Thyroid gland (tissue), 4 donors: ENCODE measurements at regions of chr20 and their contacts with region 1.

Region 1: GRCh38 chr20:49219089-49219923 is at the start of gene DDX27:
- DNase-seq: peak; percentile 96 to 97
- H3K4me3 ChIP-seq: peak within 1 kb of the TSS; percentile 37 to 74 (median 52)
- H3K27ac ChIP-seq: peak within 1 kb of the TSS; percentile 44 to 89 (median 83)
- H3K4me1 ChIP-seq: peaks cover 13 to 18% of the 10 kb centered on the region in 2 donors
- H3K27me3 ChIP-seq: no peaks in the 10 kb centered on the region
- CTCF ChIP-seq: no peak
- POLR2A ChIP-seq: peak in 1 of 2 donors; percentile 91
- total RNA-seq, gene DDX27: 30.4 to 45.8 (median 38.2) TPM

Region 2: GRCh38 chr20:49132995-49133478 is 86.3 kb before region 1 on chr20:
- intact Hi-C with region 1: loop called (anchors 5 kb)
- DNase-seq: peak in 1 of 2 donors; percentile 22
- H3K4me3 ChIP-seq: no peak overlapping the region
- H3K27ac ChIP-seq: peak overlapping the region; percentile 22 to 61 (median 52)
- H3K4me1 ChIP-seq: peaks cover 6 to 8% of the 10 kb centered on the region in 2 donors
- H3K27me3 ChIP-seq: no peaks in the 10 kb centered on the region
- CTCF ChIP-seq: peak; percentile 8 to 83 (median 61)
- POLR2A ChIP-seq: no peak